ENCODE measurements at regions of chr10 and their contacts with region 1.

Region 1: DNA sequence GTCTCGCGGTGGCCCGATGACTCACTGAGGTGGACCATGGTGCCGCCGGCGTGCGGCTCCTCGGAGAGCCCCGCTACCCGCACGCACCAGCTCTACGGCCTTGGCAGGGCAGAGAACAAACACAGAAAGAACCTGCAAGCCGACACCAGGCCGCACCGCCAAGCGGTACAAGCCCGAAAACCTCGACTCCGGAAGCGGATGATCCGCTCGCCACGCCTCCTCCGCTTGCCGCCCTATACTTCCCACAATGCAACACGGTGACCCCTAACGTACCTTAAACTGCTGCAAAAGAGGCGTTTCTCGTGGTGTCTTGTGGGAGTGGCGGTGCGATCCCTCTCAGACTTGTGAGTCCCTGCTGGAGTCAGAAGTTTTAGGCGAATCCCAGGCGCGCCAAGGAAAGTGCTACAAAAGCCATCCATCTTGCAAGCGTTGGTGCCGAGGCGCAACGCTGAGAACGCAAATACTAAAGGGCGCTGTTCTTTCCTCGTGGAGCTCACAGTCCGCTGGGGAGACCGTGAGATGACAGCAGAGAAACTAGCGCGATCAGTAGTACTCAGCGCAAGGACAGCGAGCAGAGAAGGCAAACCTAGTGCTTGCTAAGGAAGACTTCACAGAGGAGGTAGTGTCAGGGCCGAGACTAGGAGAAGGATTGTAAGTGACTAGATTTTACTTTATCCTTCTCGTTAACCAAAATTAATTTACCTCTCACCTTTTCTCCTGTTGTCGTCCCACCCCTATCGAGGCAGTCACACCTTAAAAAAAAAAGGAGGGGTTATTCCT is at the start of gene MRPS16:
- DNase-seq: peak; percentile 98
- H3K4me3 ChIP-seq: peak within 1 kb of the TSS; percentile 47 to 84 (median 78)
- H3K27ac ChIP-seq: peak within 1 kb of the TSS; percentile 85 to 93 (median 88)
- H3K4me1 ChIP-seq: peaks cover 0 to 32% (median 26%) of the 10 kb centered on the region in 4 donors
- H3K27me3 ChIP-seq: no peaks in the 10 kb centered on the region
- CTCF ChIP-seq: no peak
- EP300 ChIP-seq: peak in 1 of 4 donors; percentile 69
- POLR2A ChIP-seq: peak; percentile 61 to 64
- total RNA-seq, gene MRPS16: 29.2 to 40.0 (median 33.8) TPM

Region 2: GRCh38 chr10:73296946-73297345 is 44.3 kb after region 1 on chr10:
- intact Hi-C with region 1: no loop called
- DNase-seq: no peak
- H3K4me3 ChIP-seq: no peak overlapping the region
- H3K27ac ChIP-seq: no peak overlapping the region
- H3K4me1 ChIP-seq: no peaks in the 10 kb centered on the region
- H3K27me3 ChIP-seq: no peaks in the 10 kb centered on the region
- CTCF ChIP-seq: no peak
- EP300 ChIP-seq: no peak
- POLR2A ChIP-seq: no peak

Region 3: DNA sequence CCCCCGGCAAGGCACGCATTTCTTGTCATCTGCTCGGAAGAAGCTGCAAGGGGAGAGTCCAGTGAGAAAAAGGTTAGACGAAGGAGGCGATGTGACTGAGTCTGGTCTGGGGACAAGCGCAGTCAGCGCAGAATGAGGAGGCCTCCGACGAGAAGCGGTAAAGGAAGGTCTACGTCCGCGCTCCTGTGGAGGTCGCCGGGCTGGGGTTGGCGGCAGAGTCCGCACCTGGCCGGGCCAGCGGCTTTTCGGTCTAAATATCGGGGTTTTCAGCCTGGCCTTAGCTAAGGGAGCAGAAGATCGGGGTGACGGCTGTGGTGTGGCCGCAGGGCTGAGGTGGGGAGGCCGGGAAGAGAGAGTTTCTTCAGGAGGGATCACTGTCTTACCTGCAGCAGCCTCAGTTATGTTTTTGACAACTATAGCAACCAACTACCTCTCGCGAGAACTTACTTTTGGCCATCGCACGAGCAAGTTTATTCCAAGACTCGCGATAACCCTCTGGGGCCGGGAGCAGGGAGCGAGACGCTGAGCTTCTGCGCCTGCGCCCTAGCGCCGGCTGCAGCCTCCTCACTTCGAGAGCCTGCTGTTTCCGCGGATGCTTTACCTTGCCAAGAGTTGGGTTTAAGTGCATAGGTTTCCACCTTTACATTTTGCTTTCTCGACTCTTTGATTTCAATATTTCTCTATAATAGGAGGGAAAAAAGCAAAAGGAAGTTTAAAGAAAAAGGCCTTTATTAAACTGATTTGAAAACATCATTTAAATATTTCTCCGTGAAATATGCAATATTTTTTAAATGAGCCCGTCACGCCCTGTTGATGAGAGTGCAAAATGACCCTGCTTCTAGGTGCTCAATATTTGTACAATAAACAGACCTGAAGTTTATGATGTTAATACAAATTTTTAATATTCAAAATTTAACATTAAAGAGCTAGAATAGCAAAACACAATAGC is 106.0 kb after region 1 on chr10 and contains the start of gene CFAP70:
- intact Hi-C with region 1: loop called (anchors 5 kb)
- DNase-seq: peak; percentile 97
- H3K4me3 ChIP-seq: peak within 1 kb of the TSS; percentile 59 to 82 (median 70)
- H3K27ac ChIP-seq: peak within 1 kb of the TSS; percentile 64 to 73 (median 70)
- H3K4me1 ChIP-seq: peaks cover 0 to 14% (median 6%) of the 10 kb centered on the region in 4 donors
- H3K27me3 ChIP-seq: no peaks in the 10 kb centered on the region
- CTCF ChIP-seq: no peak
- EP300 ChIP-seq: peak in 1 of 4 donors; percentile 13
- POLR2A ChIP-seq: no peak
- total RNA-seq, gene CFAP70: 0.66 to 1.8 (median 1.3) TPM

Region 4: GRCh38 chr10:73413528-73414229 is 161.0 kb after region 1 on chr10 and contains the start of gene ANXA7:
- intact Hi-C with region 1: loop called (anchors 5 kb)
- DNase-seq: peak; percentile 96
- H3K4me3 ChIP-seq: peak within 1 kb of the TSS; percentile 76 to 82 (median 77)
- H3K27ac ChIP-seq: peak within 1 kb of the TSS; percentile 90 to 95 (median 92)
- H3K4me1 ChIP-seq: peaks cover 0 to 32% (median 23%) of the 10 kb centered on the region in 4 donors
- H3K27me3 ChIP-seq: no peaks in the 10 kb centered on the region
- CTCF ChIP-seq: peak in 2 of 4 experiments; percentile 13 to 19
- EP300 ChIP-seq: no peak
- POLR2A ChIP-seq: peak; percentile 69 to 71
- total RNA-seq, gene ANXA7: 61.5 to 96.8 (median 91.4) TPM

Region 5: DNA sequence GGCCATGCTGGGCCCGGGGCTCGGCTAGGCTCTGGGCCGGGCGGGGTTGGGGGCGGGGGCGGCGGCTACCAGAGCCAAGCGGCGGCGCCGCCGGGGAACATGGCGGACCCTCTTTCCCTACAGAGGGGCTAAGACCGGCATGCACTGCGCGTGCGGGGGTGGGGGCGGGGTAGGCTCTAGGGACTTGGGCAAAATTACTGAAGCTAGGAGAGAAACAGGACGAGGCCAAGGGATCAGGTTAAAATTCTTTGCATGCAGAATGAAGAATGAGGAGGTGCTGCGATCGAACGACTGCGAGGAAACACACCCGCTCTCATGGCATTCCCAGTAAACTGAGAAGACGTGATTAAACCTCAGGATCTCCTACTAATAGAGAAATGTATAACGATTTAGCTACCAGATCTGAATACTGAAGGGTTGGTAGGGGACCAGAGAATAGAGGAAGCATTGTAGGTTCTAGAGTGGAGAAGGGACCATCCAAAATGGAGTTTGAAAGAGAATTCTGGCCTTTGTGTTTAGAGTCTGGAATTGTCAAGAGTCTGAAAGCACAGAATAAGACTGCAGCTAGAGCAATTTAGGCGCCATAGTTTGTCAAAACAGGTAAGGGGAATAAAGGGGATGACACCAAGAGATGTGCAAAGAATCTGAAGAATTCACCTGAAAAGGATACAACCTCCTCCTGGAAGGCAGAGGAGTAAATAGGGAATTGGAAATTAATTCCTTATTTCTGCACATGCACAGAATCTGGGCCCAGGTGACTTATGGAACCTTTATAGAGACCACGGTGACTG is 243.4 kb after region 1 on chr10 and contains the start of gene PPP3CB:
- intact Hi-C with region 1: loop called (anchors 5 kb)
- DNase-seq: peak; percentile 93
- H3K4me3 ChIP-seq: peak within 1 kb of the TSS; percentile 62 to 85 (median 84)
- H3K27ac ChIP-seq: peak within 1 kb of the TSS; percentile 90 to 96 (median 92)
- H3K4me1 ChIP-seq: peaks cover 0 to 54% (median 41%) of the 10 kb centered on the region in 4 donors
- H3K27me3 ChIP-seq: no peaks in the 10 kb centered on the region
- CTCF ChIP-seq: no peak
- EP300 ChIP-seq: peak in 1 of 4 donors; percentile 28
- POLR2A ChIP-seq: no peak
- total RNA-seq, gene PPP3CB: 75.5 to 103 (median 85.8) TPM

Measured in sigmoid colon (tissue), 7 donors.